ENCODE measurements at regions of chr4 and their contacts with region 1.

Region 1: DNA sequence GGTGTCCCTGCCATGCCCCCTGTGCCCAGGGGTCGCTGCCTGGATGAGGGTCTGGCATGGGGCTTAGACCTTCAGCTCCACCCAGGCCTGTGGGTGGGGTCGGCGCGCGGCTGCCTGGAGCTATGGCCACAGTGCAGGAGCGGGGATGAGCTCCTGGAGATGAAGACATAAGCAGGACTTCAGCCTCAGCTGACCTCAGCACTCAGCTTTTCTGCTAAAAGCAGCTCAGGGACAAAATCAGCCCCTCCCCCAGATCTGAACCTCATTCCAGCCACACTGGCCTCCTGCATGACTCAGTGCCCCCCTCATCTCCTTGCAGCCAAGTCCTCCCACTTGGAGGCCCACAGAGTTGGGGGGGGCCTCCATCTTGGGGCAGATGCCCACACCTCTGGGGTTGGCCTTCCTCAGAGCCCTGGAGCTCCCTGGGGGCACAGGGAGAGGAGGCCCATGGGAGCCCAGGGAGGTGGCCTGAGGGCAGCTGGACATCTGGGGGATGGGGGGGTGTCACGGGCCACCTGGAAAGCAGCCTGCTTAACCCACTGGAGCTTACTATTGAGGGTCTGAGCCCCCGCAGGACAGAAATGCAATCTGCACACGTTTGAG is 19.4 kb upstream of the CPLX1 start:
- DNase-seq: no peak
- H3K4me3 ChIP-seq: no peak overlapping the region
- CTCF ChIP-seq: no peak

Region 2: DNA sequence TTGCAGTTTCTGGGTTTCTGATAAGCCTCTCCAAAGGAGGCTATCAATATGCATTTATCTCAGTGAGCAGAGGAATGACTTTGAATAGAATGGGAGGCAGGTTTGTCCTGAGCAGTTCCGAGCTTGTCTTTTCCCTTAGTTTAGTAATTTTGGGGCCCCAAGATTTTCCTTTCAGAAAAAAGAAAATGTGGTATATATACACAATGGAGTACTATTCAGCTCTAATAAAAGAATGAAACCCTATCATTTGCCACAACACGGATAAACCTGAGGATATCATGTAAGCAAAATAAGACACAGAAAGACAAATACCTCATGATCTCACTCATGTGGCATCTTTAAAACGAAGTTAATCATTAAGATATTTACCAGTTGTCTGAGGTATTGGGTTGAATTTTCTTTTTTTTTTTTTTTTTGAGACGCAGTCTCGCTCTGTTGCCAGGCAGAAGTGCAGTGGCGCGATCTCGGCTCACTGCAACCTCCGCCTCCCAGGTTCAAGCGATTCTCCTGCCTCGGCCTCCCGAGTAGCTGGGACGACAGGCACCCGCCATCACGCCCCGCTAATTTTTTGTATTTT is 346.9 kb before region 1 on chr4:
- in situ Hi-C with region 1: no loop called
- DNase-seq: no peak
- H3K4me3 ChIP-seq: peak overlapping the region; percentile 97
- CTCF ChIP-seq: no peak

Region 3: GRCh38 chr4:766152-766515 is 79.2 kb before region 1 on chr4:
- in situ Hi-C with region 1: loop called (anchors 5 kb)
- DNase-seq: no peak
- H3K4me3 ChIP-seq: no peak overlapping the region
- CTCF ChIP-seq: no peak

Region 4: DNA sequence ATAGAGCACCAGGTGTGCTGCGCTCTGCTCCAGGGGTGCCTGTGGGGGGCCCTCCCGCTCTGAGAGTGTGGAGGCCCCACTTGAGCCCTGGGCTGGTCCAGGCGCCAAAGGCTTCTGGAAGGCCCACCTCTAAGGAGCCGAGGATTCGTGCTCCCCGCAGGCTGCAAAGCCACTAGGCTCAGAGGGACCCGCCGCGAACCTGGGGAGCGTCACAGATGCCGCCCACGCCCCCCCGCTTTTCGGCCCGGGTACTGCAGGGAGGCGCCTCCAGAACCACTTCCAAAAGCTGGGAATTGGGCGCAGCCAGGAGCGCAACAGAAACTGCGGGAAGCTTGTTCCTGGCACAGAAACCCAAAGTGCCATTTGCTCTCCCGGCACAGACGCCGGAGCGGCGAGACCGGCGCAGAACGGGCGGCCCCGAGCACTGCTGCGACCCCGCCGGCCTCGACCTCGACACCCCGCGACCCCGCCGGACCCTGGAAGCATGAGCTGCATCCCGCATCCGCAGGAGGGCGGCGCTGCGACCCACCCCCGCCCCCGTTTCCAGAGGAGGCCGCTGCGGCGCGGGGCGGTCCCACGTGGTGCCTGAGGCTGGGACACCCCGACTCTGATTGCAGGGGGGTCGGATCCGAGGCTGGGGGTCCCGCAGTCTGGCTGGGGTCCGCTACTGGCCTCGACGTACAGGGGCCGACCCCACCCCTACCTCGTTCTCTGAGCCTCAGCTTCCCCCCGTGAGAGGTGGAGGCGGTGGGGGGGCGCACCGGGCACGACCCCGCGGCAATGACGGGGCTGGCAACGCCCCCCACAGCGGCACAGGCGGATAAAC is 50.2 kb before region 1 on chr4:
- in situ Hi-C with region 1: loop called (anchors 5 kb)
- DNase-seq: no peak
- H3K4me3 ChIP-seq: no peak overlapping the region
- CTCF ChIP-seq: no peak

Region 5: GRCh38 chr4:903066-904046 is 58.0 kb after region 1 on chr4:
- in situ Hi-C with region 1: loop called (anchors 5 kb)
- DNase-seq: no peak
- H3K4me3 ChIP-seq: no peak overlapping the region
- CTCF ChIP-seq: no peak

Region 6: GRCh38 chr4:931960-932712 is 86.8 kb after region 1 on chr4 and contains the starts of genes GAK and TMEM175:
- in situ Hi-C with region 1: loop called (anchors 5 kb)
- DNase-seq: peak; percentile 83
- H3K4me3 ChIP-seq: peak within 1 kb of the TSS; percentile 99
- CTCF ChIP-seq: peak; percentile 10